ENCODE measurements at regions of chr16 and their contacts with region 1.

Region 1: DNA sequence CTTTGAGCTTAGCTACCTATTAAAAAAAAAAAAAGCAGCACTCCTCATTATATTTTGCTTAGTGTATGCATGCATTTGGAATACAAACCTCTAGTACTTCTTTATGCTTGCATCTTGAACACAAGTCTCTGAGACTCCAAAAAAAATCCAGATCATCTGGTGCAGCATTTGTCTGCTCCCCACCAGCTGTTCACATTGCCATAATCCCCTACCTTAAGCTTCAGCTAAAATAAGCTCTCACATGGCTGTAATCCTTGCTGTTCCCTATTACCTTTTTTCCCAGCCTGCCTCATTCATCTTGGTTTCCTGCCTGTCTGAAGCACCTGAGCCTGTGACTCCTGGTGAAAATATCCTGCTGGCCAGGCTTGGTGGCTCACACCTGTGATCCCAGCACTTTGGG is 7.5 kb upstream of the NFATC2IP start:
- DNase-seq: no peak
- H3K4me3 Mint-ChIP-seq: no peak overlapping the region
- H3K27ac Mint-ChIP-seq: no peak overlapping the region
- H3K4me1 Mint-ChIP-seq: peaks cover 15% of the 10 kb centered on the region
- H3K27me3 Mint-ChIP-seq: peaks cover 2% of the 10 kb centered on the region

Region 2: GRCh38 chr16:28879841-28880588 is 63.3 kb before region 1 on chr16:
- intact Hi-C with region 1: loop called (anchors 1 kb)
- DNase-seq: peak; percentile 95
- H3K4me3 Mint-ChIP-seq: peak overlapping the region; percentile 96
- H3K27ac Mint-ChIP-seq: peak overlapping the region; percentile 81
- H3K4me1 Mint-ChIP-seq: peaks cover 21% of the 10 kb centered on the region
- H3K27me3 Mint-ChIP-seq: no peaks in the 10 kb centered on the region

Region 3: GRCh38 chr16:29007730-29008593 is 64.7 kb after region 1 on chr16:
- intact Hi-C with region 1: no loop called
- DNase-seq: peak; percentile 89
- H3K4me3 Mint-ChIP-seq: peak overlapping the region; percentile 69
- H3K27ac Mint-ChIP-seq: peak overlapping the region; percentile 95
- H3K4me1 Mint-ChIP-seq: peaks cover 43% of the 10 kb centered on the region
- H3K27me3 Mint-ChIP-seq: no peaks in the 10 kb centered on the region

Measured in activated CD4-positive, alpha-beta T cell treated with anti-CD3 and anti-CD28 coated beads, Interleukin-2, amount 10 ng/mL, durations not matched to agents 24 days and 14 days (primary cell).